ENCODE measurements at regions of chr14 and their contacts with region 1.

Region 1: GRCh38 chr14:88551094-88551870 is 3.5 kb downstream of the PTPN21 start:
- DNase-seq: peak; percentile 94

Region 2: GRCh38 chr14:88492272-88493089 is 58.8 kb before region 1 on chr14:
- intact Hi-C with region 1: loop called (anchors 5 to 10 kb)
- DNase-seq: no peak

Region 3: DNA sequence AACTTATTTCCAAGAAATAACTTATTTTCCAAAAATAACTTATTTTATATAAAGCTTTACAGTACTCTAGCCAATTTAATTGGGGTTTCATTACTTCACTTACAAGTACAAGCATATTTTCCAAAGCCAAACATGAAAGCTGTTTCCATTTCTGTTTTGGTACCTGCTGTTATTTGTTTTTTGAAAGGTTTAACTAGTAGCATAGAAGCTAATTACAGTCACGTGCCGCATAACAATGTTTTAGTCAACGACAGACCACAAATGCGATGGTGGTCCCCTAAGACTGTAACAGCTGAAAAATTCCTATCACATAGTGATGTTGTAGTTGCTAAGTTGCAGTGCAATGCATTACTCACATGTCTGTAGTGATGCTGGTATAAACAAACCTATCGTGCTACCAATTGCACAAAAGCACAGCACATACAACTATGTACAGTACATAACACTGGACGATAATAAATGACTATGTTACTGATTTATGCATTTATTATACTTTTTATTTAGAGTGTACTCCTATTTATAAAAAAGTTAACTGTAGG is 18.1 kb before region 1 on chr14:
- intact Hi-C with region 1: no loop called
- DNase-seq: no peak